ENCODE measurements at regions of chr1 and their contacts with region 1.

Region 1: GRCh38 chr1:204941421-204942338 is 71.0 kb downstream of the NFASC start:
- DNase-seq: peak; percentile 60 to 77 (median 62)
- ATAC-seq: peak; percentile 63 to 84 (median 74)
- H3K4me3 ChIP-seq: no peak overlapping the region
- H3K27ac ChIP-seq: peak overlapping the region in 1 of 12 donors; percentile 4
- H3K4me1 ChIP-seq: peaks cover 0 to 10% (median 3%) of the 10 kb centered on the region in 12 donors
- H3K27me3 ChIP-seq: no peaks in the 10 kb centered on the region
- CTCF ChIP-seq: peak; percentile 80 to 97 (median 90)
- POLR2A ChIP-seq: no peak

Region 2: DNA sequence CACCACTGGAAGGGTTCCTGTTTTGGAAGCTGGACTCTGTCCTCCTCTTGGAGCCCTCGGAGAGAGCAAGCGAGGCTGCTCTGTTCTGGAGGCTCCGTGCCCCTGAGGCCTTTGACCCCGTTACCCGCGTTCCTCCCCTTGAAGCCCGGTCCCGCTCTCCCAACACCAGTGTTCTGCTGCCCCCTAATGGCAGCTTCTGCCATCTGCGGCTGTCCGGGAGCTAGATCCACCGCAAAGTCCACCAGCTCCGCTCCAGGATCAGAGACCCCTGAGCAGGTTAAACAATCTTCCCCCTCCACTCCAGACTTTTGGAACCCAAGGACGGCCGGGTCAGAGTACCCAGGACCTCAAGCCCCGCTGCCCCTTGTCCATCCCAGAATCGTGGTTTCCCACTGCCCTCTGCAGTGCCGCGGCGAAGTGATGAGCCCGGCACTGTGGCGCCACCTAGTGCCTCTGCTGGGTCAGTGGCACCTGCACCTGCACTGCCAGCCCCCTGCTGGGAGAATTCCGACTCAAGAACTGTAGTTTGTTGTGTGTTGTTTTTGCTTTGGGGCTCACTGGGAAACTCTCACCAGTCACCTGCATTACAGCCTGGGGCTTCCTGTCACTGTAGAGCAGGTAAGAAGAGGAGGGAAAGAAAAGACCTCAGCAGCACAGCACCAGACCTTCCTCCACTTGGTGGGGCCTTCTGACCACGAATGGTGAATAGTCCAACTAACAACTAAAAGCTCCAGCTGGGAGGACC is 134.6 kb before region 1 on chr1:
- intact Hi-C with region 1: loop called (anchors 1 to 5 kb)
- DNase-seq: peak; percentile 80 to 86 (median 82)
- ATAC-seq: peak; percentile 85 to 96 (median 94)
- H3K4me3 ChIP-seq: peak overlapping the region in 11 of 12 donors; percentile 37 to 63 (median 51)
- H3K27ac ChIP-seq: no peak overlapping the region
- H3K4me1 ChIP-seq: peaks cover 0 to 11% (median 0%) of the 10 kb centered on the region in 12 donors
- H3K27me3 ChIP-seq: no peaks in the 10 kb centered on the region
- CTCF ChIP-seq: peak; percentile 92 to 98 (median 96)
- POLR2A ChIP-seq: no peak

Region 3: DNA sequence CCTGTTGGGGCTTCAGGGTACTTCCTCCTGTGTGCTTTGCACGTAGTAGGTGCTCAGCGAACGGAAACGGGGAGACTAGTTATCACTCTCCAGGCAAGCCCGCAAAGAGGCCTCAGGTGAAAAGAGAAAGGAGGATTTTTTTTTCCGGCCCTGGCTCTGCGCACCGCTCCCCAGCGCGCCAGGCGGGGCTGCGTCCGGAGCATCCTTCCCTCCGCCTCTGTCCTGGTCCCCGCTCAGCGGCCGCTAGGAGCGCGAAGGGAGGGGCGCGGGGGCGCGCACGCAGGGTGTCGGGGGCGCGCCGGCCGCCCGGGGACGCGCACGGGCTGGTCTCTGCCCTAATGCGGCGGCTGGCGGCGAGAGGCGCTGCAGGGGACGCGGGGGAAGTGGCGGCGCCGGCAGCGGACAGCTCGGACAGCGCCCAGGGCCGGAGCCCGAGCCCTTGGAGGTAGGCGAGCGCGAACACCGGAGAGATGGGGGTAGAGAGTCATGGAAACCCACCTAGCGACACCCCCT is 113.3 kb before region 1 on chr1:
- intact Hi-C with region 1: loop called in 2 of 10 experiments (anchors 5 kb)
- DNase-seq: peak; percentile 76 to 85 (median 78)
- ATAC-seq: peak; percentile 87 to 98 (median 94)
- H3K4me3 ChIP-seq: peak overlapping the region; percentile 38 to 72 (median 56)
- H3K27ac ChIP-seq: peak overlapping the region in 6 of 12 donors; percentile 18 to 63 (median 46)
- H3K4me1 ChIP-seq: peaks cover 0 to 20% (median 6%) of the 10 kb centered on the region in 12 donors
- H3K27me3 ChIP-seq: peaks cover 0 to 13% (median 0%) of the 10 kb centered on the region in 9 donors
- CTCF ChIP-seq: peak in 8 of 12 donors; percentile 17 to 48 (median 33)
- POLR2A ChIP-seq: no peak

Region 4: DNA sequence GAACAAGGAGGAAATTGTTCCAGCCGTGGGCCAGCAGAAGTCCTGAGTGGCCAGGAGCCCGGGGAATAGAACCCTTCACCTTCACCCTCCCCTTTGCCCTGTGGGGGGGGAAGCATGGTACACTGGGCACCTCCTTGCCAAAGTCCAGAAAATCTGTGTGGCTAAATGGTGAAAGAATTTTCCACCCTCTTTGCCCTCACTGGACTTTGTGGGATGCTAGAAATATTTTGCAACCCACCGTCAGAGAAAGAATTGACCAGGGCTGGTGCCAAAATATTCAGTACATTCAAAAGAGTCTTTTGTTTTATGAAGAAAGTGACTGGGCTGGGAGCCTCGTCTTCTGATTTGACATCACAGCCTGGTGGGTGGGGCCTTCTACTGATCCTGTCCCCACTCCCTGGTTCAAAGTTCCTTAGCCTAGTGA is 56.4 kb before region 1 on chr1:
- intact Hi-C with region 1: loop called in 3 of 10 experiments (anchors 5 kb)
- DNase-seq: peak in 3 of 5 donors; percentile 46 to 57 (median 53)
- ATAC-seq: peak in 2 of 4 donors; percentile 21 to 55
- H3K4me3 ChIP-seq: peak overlapping the region in 4 of 12 donors; percentile 7 to 31 (median 16)
- H3K27ac ChIP-seq: peak overlapping the region in 10 of 12 donors; percentile 12 to 75 (median 54)
- H3K4me1 ChIP-seq: peaks cover 0 to 70% (median 23%) of the 10 kb centered on the region in 12 donors
- H3K27me3 ChIP-seq: peaks cover 0 to 31% (median 0%) of the 10 kb centered on the region in 9 donors
- CTCF ChIP-seq: no peak
- POLR2A ChIP-seq: no peak

Region 5: GRCh38 chr1:204991342-204991844 is 49.7 kb after region 1 on chr1:
- intact Hi-C with region 1: no loop called
- DNase-seq: no peak
- ATAC-seq: no peak
- H3K4me3 ChIP-seq: no peak overlapping the region
- H3K27ac ChIP-seq: peak overlapping the region in 1 of 12 donors; percentile 26
- H3K4me1 ChIP-seq: peaks cover 0 to 10% (median 0%) of the 10 kb centered on the region in 12 donors
- H3K27me3 ChIP-seq: no peaks in the 10 kb centered on the region
- CTCF ChIP-seq: no peak
- POLR2A ChIP-seq: no peak

Measured in heart left ventricle (tissue), 16 donors.